Colonic mucosa (tissue), 4 donors: ENCODE measurements at regions of chr14 and their contacts with region 1.

Region 1: DNA sequence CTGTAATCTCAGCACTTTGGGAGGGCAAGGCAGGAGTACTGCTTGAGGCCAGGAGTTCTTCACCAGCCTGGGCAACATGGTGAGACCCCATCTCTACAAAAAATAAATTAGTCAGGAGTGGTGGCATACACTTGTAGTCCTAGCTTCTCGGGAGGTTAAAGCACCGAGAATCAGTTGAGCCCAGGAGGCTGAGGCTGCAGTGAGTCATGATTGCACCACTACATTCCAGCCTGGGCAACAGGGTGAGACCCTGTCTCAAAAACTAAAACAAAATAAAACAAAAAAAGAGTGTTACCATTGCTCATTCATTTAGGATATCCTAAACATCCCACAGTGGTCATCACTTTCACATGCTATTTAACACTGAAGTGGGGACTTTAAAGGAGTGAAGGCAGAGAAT is 7.8 kb downstream of the NEK9 start:
- DNase-seq: no peak
- H3K4me3 ChIP-seq: no peak overlapping the region
- H3K27ac ChIP-seq: no peak overlapping the region
- H3K4me1 ChIP-seq: no peaks in the 10 kb centered on the region
- H3K27me3 ChIP-seq: no peaks in the 10 kb centered on the region
- CTCF ChIP-seq: no peak

Region 2: GRCh38 chr14:75497191-75497590 is 378.1 kb after region 1 on chr14:
- intact Hi-C with region 1: loop called (anchors 10 kb)
- DNase-seq: no peak
- H3K4me3 ChIP-seq: no peak overlapping the region
- H3K27ac ChIP-seq: no peak overlapping the region
- H3K4me1 ChIP-seq: no peaks in the 10 kb centered on the region
- H3K27me3 ChIP-seq: no peaks in the 10 kb centered on the region
- CTCF ChIP-seq: no peak